PC-9 (cell line): ENCODE measurements at regions of chr1 and their contacts with region 1.

Region 1: GRCh38 chr1:153796791-153797659 is 21.8 kb downstream of the SLC27A3 start:
- DNase-seq: peak; percentile 48 to 73
- H3K4me3 ChIP-seq: no peak overlapping the region
- H3K27ac ChIP-seq: no peak overlapping the region
- H3K4me1 ChIP-seq: no peaks in the 10 kb centered on the region; the same call in 1 of the 2 replicates
- H3K27me3 ChIP-seq: no peaks in the 10 kb centered on the region
- CTCF ChIP-seq: peak; percentile 93

Region 2: GRCh38 chr1:153447498-153448170 is 349.4 kb before region 1 on chr1:
- CTCF ChIA-PET with region 1: no interaction called
- POLR2A ChIA-PET with region 1: no interaction called
- intact Hi-C with region 1: no loop called
- DNase-seq: no peak
- H3K4me3 ChIP-seq: no peak overlapping the region
- H3K27ac ChIP-seq: no peak overlapping the region
- H3K4me1 ChIP-seq: 0 out of 2 replicates have a peak, but pooled peaks cover 5% of the 10 kb centered on the region
- H3K27me3 ChIP-seq: peaks cover 54% of the 10 kb centered on the region
- CTCF ChIP-seq: no peak

Region 3: DNA sequence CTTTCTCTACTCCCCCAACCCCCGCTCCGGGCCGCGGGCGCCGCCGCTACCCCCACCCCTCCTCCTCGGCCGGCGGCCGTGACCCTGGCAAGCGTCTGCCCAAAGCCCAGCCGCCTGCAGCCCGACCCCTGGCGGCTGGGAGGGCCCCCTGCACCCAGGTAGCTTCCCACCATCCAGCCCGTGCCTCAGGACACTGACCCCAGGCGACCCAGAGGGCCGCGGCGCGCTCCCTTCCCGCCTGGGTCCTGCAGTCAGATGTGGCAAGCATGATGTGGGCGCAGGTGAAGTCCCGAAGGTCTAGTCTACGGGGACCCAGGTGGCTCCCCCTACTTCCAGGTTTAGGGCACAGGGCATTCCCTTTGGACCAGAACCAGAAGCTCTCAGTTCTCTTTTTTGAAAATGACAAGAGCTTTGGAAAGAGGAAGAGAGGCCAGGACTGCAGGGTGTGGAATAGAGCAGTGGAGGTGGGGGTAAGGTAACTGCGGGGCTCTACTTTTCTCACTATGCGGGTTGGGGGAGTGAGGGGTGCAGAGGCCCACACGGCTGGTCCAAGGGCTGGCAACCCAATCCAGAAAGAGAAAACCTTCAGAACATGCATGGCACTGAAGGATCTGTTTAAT is 149.7 kb after region 1 on chr1 and contains the start of gene DENND4B:
- CTCF ChIA-PET with region 1: interaction called, 3 read pairs
- POLR2A ChIA-PET with region 1: interaction called, 11 read pairs
- intact Hi-C with region 1: loop called (anchors 1 kb)
- DNase-seq: peak; percentile 59 to 79
- H3K4me3 ChIP-seq: peak within 1 kb of the TSS; percentile 85
- H3K27ac ChIP-seq: no peak within 1 kb of the TSS
- H3K4me1 ChIP-seq: peaks cover 10% of the 10 kb centered on the region; the same call in 1 of the 2 replicates
- H3K27me3 ChIP-seq: no peaks in the 10 kb centered on the region
- CTCF ChIP-seq: peak; percentile 88
- total RNA-seq, gene DENND4B: 41.3 and 52.7 TPM in 2 replicates